CD4-positive, alpha-beta memory T cell (primary cell): ENCODE measurements at regions of chr9 and their contacts with region 1.

Region 1: DNA sequence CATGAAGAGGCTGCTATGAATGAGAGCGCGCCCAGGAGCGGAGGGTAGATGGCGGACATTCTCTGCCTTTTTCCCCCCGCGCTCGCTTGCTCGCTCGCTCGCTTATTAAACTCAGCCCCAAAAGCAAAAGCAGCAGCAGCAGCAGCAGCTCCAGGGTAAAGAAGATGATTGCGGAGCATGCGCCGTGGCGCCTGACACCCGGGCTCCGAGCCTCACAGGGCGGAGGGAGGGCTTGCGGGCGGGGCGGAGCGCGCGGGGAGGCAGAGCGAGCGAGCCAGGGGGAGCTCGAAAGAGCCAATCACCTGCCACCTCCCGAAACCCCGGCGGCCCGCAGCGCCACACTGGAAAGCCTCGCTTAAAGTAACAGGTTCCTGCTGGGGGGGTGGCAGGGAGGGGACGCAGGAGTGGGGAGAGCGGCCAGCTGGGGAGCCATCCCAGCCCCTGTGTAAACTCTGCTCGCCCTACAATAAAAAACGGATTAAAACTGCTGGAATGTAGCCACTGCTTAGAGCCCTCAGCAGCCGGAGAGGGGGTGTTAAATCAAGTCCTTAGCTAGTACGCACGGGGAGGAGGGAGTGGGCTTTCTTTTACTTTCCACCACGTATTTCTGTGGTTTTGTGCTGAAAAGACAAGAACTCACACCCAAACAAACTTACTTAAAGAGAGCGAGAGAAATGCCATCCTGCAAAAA is at the start of gene MLLT3:
- DNase-seq: peak; percentile 95 to 97 (median 97)
- H3K4me3 ChIP-seq: peak within 1 kb of the TSS; percentile 68 to 93
- H3K4me3 Mint-ChIP-seq: peak within 1 kb of the TSS; percentile 95 to 100 (median 99)
- H3K27ac ChIP-seq: peak within 1 kb of the TSS; percentile 69
- H3K27ac Mint-ChIP-seq: peak within 1 kb of the TSS; percentile 96 to 99 (median 98)
- H3K4me1 ChIP-seq: peaks cover 42% of the 10 kb centered on the region
- H3K4me1 Mint-ChIP-seq: peaks cover 35 to 71% (median 40%) of the 10 kb centered on the region in 4 donors
- H3K27me3 ChIP-seq: no peaks in the 10 kb centered on the region
- H3K27me3 Mint-ChIP-seq: peaks cover 0 to 2% of the 10 kb centered on the region in 2 donors
- total RNA-seq, gene MLLT3: 52.5 to 54.4 TPM

Region 2: DNA sequence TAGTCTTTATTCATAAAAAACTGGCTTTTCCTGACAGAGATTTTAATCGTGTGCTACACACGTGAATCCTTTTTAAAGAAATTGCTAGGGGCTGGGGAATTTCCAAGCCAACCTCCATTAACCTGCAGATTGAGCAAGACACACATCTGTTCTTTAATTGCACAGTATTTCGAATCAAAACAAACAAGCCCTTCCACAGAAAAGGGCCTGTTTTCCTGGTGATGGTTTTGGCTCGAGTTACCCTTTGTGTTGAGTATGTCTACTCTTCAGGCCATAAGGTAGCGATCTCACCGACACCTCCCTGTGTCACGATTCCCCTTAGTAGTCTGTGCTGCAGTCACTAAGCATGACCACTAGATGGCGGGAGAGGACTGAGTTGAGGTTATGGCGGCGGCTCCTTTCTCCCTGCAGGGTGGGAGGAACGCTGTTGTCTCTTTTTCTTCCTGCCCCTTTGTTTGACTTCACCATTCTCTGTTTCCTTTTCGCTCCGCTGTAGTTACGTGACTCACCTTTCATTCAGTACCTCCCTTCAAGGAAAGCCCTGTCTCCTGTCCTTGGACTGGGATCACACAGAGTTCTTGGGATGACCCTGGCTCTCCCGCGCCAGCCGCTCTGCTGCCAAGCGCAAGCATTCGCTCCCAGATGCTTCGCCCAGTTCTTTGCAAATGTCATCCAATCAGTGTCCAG is 696.5 kb before region 1 on chr9:
- CTCF ChIA-PET with region 1: interaction called, 7 read pairs
- POLR2A ChIA-PET with region 1: no interaction called
- intact Hi-C with region 1: loop called (anchors 1 kb)
- DNase-seq: peak; percentile 77 to 82 (median 79)
- H3K4me3 ChIP-seq: peak overlapping the region in 1 of 2 donors; percentile 27
- H3K4me3 Mint-ChIP-seq: peak overlapping the region; percentile 60 to 81 (median 76)
- H3K27ac ChIP-seq: no peak overlapping the region
- H3K27ac Mint-ChIP-seq: peak overlapping the region in 1 of 7 donors; percentile 21
- H3K4me1 ChIP-seq: peaks cover 8% of the 10 kb centered on the region
- H3K4me1 Mint-ChIP-seq: peaks cover 0 to 7% (median 5%) of the 10 kb centered on the region in 4 donors
- H3K27me3 ChIP-seq: no peaks in the 10 kb centered on the region
- H3K27me3 Mint-ChIP-seq: peaks cover 0 to 10% of the 10 kb centered on the region in 2 donors

Region 3: DNA sequence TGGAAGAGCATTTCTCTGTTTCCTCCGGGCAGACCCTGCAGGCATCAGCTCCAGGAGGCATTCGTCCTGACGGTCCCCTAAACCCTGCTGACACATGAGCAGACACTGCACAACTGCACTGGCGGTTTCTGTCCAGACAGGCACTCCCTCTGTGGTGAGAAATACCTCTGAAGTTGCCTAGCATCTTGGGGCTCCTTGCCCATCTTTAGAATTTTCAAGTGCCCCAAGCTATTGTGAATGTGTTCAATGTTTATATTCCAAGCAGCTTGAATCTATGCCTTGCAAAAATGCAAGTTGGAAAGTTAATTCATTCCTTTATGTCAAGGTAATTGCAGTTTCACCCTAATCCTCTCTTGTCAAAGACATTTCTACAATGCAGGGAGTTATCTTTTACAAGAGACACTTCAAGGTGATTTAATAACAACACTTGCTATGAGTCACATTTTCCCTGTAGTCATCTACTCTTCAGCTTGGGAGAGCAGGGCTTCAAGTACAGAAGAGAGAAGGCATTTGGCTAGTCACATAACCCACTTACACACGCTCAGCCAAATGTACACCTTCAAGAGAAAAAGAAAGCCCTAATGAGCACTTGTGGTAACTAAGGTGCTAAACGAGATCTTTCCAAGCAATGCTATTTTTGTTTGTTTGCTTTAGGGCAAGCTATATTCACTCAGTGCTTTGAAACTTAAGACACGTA is 302.7 kb before region 1 on chr9:
- CTCF ChIA-PET with region 1: interaction called, 5 read pairs
- POLR2A ChIA-PET with region 1: interaction called, 17 read pairs
- intact Hi-C with region 1: no loop called
- DNase-seq: peak in 2 of 5 donors; percentile 15 to 56
- H3K4me3 ChIP-seq: no peak overlapping the region
- H3K4me3 Mint-ChIP-seq: peak overlapping the region in 4 of 8 donors; percentile 20 to 53 (median 44)
- H3K27ac ChIP-seq: no peak overlapping the region
- H3K27ac Mint-ChIP-seq: peak overlapping the region; percentile 29 to 81 (median 61)
- H3K4me1 ChIP-seq: peaks cover 77% of the 10 kb centered on the region
- H3K4me1 Mint-ChIP-seq: peaks cover 49 to 92% (median 84%) of the 10 kb centered on the region in 4 donors
- H3K27me3 ChIP-seq: no peaks in the 10 kb centered on the region
- H3K27me3 Mint-ChIP-seq: no peaks in the 10 kb centered on the region

Region 4: DNA sequence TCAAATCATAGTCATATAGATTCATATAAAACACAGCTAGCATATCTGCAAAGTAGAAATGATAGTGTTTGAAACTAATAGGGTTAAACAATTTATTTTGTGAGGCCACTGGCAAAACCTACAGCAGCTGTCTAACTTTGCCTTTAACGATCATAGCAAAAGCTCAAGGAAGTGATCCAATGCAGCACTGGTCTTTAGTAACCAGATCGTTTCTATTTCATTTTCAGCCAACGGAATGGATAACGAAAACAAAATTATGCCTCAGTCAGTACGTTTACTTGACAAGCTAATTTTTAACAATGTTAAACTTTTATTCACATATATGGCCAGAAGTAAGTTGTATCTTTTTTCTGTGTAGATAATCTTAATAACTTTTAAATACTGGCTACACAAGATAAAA is 17.9 kb before region 1 on chr9:
- CTCF ChIA-PET with region 1: interaction called, 7 read pairs
- POLR2A ChIA-PET with region 1: interaction called, 20 read pairs
- intact Hi-C with region 1: loop called (anchors 2 kb)
- DNase-seq: peak in 2 of 5 donors; percentile 10 to 14
- H3K4me3 ChIP-seq: no peak overlapping the region
- H3K4me3 Mint-ChIP-seq: peak overlapping the region in 6 of 8 donors; percentile 48 to 75 (median 54)
- H3K27ac ChIP-seq: no peak overlapping the region
- H3K27ac Mint-ChIP-seq: peak overlapping the region in 3 of 7 donors; percentile 34 to 80 (median 65)
- H3K4me1 ChIP-seq: peaks cover 60% of the 10 kb centered on the region
- H3K4me1 Mint-ChIP-seq: peaks cover 44 to 78% (median 60%) of the 10 kb centered on the region in 4 donors
- H3K27me3 ChIP-seq: no peaks in the 10 kb centered on the region
- H3K27me3 Mint-ChIP-seq: no peaks in the 10 kb centered on the region

Region 5: GRCh38 chr9:20658677-20659473 is 36.4 kb after region 1 on chr9:
- CTCF ChIA-PET with region 1: interaction called, 4 read pairs
- POLR2A ChIA-PET with region 1: interaction called, 16 read pairs
- intact Hi-C with region 1: loop called (anchors 2 kb)
- DNase-seq: no peak
- H3K4me3 ChIP-seq: peak overlapping the region in 1 of 2 donors; percentile 55
- H3K4me3 Mint-ChIP-seq: peak overlapping the region in 2 of 8 donors; percentile 90 to 91
- H3K27ac ChIP-seq: peak overlapping the region; percentile 26
- H3K27ac Mint-ChIP-seq: peak overlapping the region in 6 of 7 donors; percentile 7 to 87 (median 79)
- H3K4me1 ChIP-seq: peaks cover 36% of the 10 kb centered on the region
- H3K4me1 Mint-ChIP-seq: peaks cover 7 to 11% (median 8%) of the 10 kb centered on the region in 4 donors
- H3K27me3 ChIP-seq: no peaks in the 10 kb centered on the region
- H3K27me3 Mint-ChIP-seq: peaks cover 0 to 1% of the 10 kb centered on the region in 2 donors

Region 6: DNA sequence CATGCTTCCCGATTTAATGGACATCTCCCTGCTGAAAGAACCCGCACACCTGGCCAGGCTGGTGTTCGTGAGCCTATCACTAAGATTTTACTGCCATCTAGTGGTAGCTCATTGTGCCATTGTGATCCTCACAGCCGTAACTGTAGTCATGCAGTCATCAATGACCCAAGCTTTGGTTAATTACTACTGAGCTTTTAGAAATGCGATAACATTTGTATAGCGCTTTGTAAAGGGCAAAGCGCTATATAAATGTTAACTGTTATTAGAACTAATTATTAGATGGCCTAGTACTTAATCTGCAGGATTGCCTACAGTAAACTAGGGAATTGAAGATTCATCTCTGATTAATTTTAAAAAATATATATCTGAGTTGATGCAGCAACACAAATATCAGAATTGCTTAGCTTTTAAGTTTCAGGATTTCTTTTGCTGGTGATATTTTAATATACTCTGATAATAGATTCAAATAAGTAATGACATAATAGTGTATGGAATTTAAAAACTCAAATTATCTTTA is 318.8 kb after region 1 on chr9:
- CTCF ChIA-PET with region 1: interaction called, 43 read pairs
- POLR2A ChIA-PET with region 1: interaction called, 4 read pairs
- intact Hi-C with region 1: loop called (anchors 1 kb)
- DNase-seq: peak; percentile 56 to 67 (median 61)
- H3K4me3 ChIP-seq: no peak overlapping the region
- H3K4me3 Mint-ChIP-seq: no peak overlapping the region
- H3K27ac ChIP-seq: no peak overlapping the region
- H3K27ac Mint-ChIP-seq: peak overlapping the region in 1 of 7 donors; percentile 77
- H3K4me1 ChIP-seq: no peaks in the 10 kb centered on the region
- H3K4me1 Mint-ChIP-seq: peaks cover 0 to 5% (median 3%) of the 10 kb centered on the region in 4 donors
- H3K27me3 ChIP-seq: no peaks in the 10 kb centered on the region
- H3K27me3 Mint-ChIP-seq: no peaks in the 10 kb centered on the region

Region 7: DNA sequence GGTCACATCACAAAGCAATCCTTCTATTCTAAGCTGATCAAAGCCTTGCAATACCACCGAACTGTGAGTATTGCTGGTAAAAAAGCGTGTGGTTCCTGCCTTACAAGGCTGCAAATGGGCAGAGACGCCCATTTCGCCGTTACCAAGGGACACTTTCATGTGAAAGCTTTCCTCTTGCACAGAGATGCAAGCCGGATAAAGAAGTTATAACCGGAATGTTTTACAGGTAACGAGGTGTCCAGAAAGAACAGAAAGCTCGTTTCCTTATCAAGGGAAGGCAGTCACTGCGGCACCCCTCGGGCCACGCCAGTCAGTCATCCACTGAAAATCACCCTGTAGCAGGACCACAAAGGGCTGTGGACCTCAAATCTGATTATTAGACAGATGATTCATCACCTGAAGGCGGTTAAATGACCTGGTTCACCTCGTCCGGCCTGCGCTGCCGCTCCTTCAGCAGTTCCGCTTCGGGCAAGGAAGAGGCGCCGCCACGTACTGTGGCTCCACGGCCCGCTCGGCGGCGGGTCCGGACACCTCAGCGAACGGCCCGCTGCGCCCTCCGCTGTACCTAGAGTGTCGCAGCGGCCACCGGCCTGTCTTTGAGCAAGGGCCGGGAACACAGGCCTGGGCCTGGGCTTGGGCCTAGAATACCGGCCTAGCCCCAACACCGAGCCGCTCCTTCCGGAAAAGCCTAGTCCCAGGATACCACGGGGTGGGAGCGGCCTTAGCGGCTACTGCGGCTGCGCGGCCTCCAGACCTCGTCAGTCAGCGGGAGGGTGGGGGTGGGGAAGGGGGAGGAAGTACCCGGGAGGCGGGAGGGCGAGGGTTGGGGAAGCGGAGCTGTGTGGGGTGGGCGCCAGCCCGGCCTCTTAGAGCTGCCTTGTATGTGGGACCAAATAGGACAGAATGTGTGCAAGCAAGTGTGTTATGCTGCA is 712.5 kb after region 1 on chr9 and contains the start of gene KLHL9:
- CTCF ChIA-PET with region 1: no interaction called
- POLR2A ChIA-PET with region 1: interaction called, 7 read pairs
- intact Hi-C with region 1: loop called (anchors 10 kb)
- DNase-seq: peak; percentile 86 to 88 (median 88)
- H3K4me3 ChIP-seq: peak within 1 kb of the TSS; percentile 80 to 96
- H3K4me3 Mint-ChIP-seq: peak within 1 kb of the TSS; percentile 89 to 97 (median 94)
- H3K27ac ChIP-seq: peak within 1 kb of the TSS; percentile 98
- H3K27ac Mint-ChIP-seq: peak within 1 kb of the TSS; percentile 95 to 98 (median 97)
- H3K4me1 ChIP-seq: peaks cover 59% of the 10 kb centered on the region
- H3K4me1 Mint-ChIP-seq: peaks cover 37 to 69% (median 49%) of the 10 kb centered on the region in 4 donors
- H3K27me3 ChIP-seq: no peaks in the 10 kb centered on the region
- H3K27me3 Mint-ChIP-seq: peaks cover 0 to 3% of the 10 kb centered on the region in 2 donors
- total RNA-seq, gene KLHL9: 38.7 to 40.1 TPM